Colonic mucosa (tissue), 4 donors: ENCODE measurements at regions of chr3 and their contacts with region 1.

Region 1: GRCh38 chr3:45656575-45657363 is 32.4 kb upstream of the SACM1L start:
- DNase-seq: peak; percentile 92
- H3K4me3 ChIP-seq: no peak overlapping the region
- H3K27ac ChIP-seq: no peak overlapping the region
- H3K4me1 ChIP-seq: peaks cover 5% of the 10 kb centered on the region
- H3K27me3 ChIP-seq: no peaks in the 10 kb centered on the region
- CTCF ChIP-seq: peak; percentile 93

Region 2: GRCh38 chr3:45037734-45038455 is 618.9 kb before region 1 on chr3:
- intact Hi-C with region 1: loop called (anchors 10 kb)
- DNase-seq: peak; percentile 98
- H3K4me3 ChIP-seq: no peak overlapping the region
- H3K27ac ChIP-seq: no peak overlapping the region
- H3K4me1 ChIP-seq: peaks cover 8% of the 10 kb centered on the region
- H3K27me3 ChIP-seq: no peaks in the 10 kb centered on the region
- CTCF ChIP-seq: peak; percentile 90

Region 3: DNA sequence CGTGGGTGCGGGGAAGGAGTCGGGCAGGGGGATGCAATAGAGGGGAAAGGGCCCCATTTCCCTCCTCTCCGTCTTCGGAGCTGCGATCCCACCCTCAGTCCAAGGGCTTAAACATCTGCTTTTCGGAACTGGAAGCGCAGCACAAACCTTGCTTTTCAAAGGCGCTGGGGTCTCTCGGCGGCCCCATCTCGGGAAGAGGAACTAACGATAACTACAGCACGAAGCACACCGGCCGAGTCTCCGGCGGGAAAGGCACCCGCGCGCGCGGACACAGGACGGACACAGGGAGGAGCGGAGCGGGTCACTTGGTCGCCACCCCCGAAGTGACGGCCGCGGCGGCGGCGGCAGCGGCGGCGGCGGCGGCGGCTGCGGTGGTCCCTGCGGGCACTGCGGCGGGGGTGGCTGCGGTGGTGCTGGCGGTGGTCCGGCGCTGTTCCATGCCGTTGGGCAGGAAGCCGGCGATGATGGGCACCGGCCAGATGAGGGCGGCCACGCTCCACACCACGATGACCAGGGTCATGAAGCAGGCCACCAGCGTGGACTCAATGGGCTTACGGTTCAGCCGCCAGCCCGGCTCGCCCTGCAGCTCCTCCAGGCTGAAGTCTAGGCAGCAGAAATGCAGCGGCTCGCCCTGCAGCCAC is 431.8 kb before region 1 on chr3:
- intact Hi-C with region 1: loop called (anchors 10 kb)
- DNase-seq: peak; percentile 75
- H3K4me3 ChIP-seq: peak overlapping the region; percentile 37
- H3K27ac ChIP-seq: peak overlapping the region; percentile 3
- H3K4me1 ChIP-seq: peaks cover 4% of the 10 kb centered on the region
- H3K27me3 ChIP-seq: peaks cover 20% of the 10 kb centered on the region
- CTCF ChIP-seq: peak; percentile 19

Region 4: DNA sequence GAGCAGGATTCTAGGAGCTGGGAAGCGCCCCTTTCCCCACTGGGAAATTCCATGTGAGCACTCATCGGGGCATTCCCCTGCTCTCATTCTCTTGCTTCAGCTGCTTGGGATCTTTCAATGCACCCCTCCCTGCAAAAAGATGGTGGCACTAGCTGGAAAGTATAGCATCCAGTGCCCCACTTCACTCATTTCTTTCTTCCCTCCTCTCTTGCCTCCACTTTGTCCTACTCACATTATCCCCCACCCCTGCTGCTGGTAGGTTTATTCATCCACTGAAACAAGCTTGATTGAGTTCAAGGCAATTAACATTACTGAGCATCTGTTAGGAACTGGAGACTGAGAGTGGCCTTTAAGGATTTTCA is 147.0 kb before region 1 on chr3:
- intact Hi-C with region 1: loop called (anchors 2 kb)
- DNase-seq: no peak
- H3K4me3 ChIP-seq: no peak overlapping the region
- H3K27ac ChIP-seq: no peak overlapping the region
- H3K4me1 ChIP-seq: no peaks in the 10 kb centered on the region
- H3K27me3 ChIP-seq: no peaks in the 10 kb centered on the region
- CTCF ChIP-seq: no peak

Region 5: DNA sequence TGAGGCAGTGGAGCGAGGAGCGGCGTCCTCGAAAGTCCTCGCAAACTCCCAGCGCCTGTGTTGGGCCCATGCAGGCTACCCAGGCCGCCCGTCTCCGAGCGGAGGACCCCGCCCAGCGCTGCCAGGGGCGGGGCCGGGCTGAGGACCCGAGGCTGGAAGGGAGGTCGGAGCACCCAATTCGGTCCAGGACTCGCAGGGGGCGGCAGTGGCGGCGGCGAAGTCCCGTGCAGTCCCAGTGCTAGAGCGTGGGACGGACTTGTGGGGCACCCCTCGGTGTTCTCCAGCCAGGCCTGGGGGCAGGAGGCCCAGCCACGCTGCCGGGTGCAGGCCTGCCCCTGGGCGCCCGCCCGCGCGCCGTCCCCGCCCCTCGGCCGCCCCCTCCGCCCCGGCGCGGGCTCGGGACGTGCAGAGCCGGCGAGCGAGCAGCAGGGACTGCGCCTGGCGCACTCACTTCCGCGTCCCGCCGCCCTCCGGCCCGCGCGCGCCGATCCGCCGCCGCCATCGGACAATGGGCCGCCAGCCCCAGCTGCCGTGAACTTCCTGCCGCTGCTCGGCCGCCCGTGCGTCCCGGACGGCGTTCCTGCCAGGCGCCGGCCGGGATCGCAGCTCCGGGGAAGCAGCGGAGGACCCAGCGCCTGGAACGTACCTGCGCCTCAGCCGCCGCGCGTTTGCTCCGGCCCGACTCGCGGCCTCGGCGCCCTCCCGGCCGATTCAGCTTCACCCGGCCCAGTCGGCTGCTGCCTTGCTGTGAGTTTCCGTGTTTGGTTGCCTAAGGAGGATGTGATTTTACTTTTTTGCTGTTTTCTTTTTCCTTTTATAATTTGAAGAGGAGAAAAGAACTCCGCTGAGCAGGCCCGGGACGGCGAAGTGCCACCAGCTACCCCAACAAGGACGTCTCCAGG is 62.8 kb before region 1 on chr3:
- intact Hi-C with region 1: loop called (anchors 2 kb)
- DNase-seq: peak; percentile 76
- H3K4me3 ChIP-seq: peak overlapping the region; percentile 78
- H3K27ac ChIP-seq: peak overlapping the region; percentile 97
- H3K4me1 ChIP-seq: peaks cover 32% of the 10 kb centered on the region
- H3K27me3 ChIP-seq: no peaks in the 10 kb centered on the region
- CTCF ChIP-seq: no peak